ENCODE measurements at regions of chr1 and their contacts with region 1.

Region 1: GRCh38 chr1:14113841-14114567 is 414.0 kb downstream of the PRDM2 start:
- DNase-seq: peak; percentile 79
- H3K4me3 ChIP-seq: no peak overlapping the region
- H3K27ac ChIP-seq: no peak overlapping the region
- H3K4me1 ChIP-seq: no peaks in the 10 kb centered on the region
- H3K27me3 ChIP-seq: peaks cover 16% of the 10 kb centered on the region

Region 2: GRCh38 chr1:15046487-15047165 is 932.6 kb after region 1 on chr1:
- in situ Hi-C with region 1: loop called (anchors 10 kb)
- DNase-seq: peak; percentile 85
- H3K4me3 ChIP-seq: no peak overlapping the region
- H3K27ac ChIP-seq: no peak overlapping the region
- H3K4me1 ChIP-seq: no peaks in the 10 kb centered on the region
- H3K27me3 ChIP-seq: no peaks in the 10 kb centered on the region

Measured in GM23248 (cell line).